ENCODE measurements at regions of chr9 and their contacts with region 1.

Region 1: GRCh38 chr9:21110708-21111576 is 30.7 kb downstream of the IFNW1 start:
- DNase-seq: peak; percentile 82
- ATAC-seq: peak; percentile 93
- H3K4me3 ChIP-seq: no peak overlapping the region
- H3K27ac ChIP-seq: no peak overlapping the region
- H3K4me1 ChIP-seq: no peaks in the 10 kb centered on the region
- H3K27me3 ChIP-seq: no peaks in the 10 kb centered on the region
- CTCF ChIP-seq: peak; percentile 90
- POLR2A ChIP-seq: no peak
- RAD21 ChIP-seq: peak; percentile 97

Region 2: DNA sequence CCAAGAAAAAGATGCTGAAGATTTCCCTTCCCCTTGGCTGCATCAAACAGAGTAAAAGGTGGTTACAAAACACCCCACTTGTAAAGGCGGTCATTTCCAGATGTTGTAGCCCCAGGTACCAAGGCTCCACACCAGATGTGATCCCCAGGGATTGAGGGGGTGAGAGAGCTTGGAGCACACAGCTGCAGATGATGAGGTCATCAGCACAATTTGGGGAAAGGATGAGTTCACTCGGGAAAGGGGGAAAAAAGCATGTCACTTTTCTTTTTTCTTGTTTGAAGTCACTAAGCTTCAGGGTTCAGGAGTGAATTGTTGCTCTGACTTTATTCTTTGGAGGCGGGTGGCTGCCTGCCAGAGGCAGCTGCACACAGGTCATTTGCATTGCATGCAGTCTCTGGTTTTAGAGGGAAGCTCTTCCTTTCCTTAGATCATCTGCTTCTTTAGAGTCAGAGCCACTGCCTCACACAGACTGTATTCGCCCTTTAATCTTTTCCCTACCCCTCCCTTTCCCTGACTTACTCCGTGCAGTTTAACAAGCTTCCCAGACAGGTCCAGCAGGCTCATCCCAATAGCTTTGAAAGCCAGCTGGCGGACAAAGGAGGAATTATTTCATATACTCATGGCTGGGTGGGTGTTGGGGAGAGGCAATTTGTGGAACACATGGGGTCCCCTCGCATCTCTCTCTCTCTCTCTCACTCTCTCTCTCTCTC is 912.8 kb before region 1 on chr9:
- CTCF ChIA-PET with region 1: no interaction called
- POLR2A ChIA-PET with region 1: no interaction called
- dilution Hi-C with region 1: no loop called
- in situ Hi-C with region 1: loop called (anchors 25 kb)
- intact Hi-C with region 1: no loop called
- DNase-seq: no peak
- ATAC-seq: no peak
- H3K4me3 ChIP-seq: no peak overlapping the region
- H3K27ac ChIP-seq: no peak overlapping the region
- H3K4me1 ChIP-seq: no peaks in the 10 kb centered on the region
- H3K27me3 ChIP-seq: peaks cover 13% of the 10 kb centered on the region
- CTCF ChIP-seq: no peak
- POLR2A ChIP-seq: no peak
- RAD21 ChIP-seq: no peak

Region 3: DNA sequence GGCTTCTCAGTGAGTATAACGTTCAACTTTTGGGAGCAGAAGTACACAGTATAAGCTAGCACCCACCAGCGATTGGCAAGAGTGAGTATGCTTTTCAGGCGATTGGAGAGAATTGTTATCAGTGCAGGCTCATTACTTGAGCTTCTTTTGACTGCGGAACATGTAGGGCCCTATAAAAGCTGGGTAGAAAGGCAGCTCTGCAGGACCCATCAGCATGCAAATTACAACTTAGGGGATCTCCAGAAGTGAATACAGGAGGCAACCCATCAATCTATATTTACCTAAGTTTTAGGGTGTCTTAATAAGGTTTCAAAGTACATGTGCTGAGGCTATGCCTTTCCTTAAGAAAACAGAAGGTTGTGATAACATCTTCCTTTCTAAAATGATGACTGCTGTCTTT is 713.6 kb before region 1 on chr9:
- CTCF ChIA-PET with region 1: no interaction called
- POLR2A ChIA-PET with region 1: no interaction called
- dilution Hi-C with region 1: no loop called
- in situ Hi-C with region 1: no loop called
- intact Hi-C with region 1: no loop called
- DNase-seq: no peak
- ATAC-seq: no peak
- H3K4me3 ChIP-seq: no peak overlapping the region
- H3K27ac ChIP-seq: no peak overlapping the region
- H3K4me1 ChIP-seq: no peaks in the 10 kb centered on the region
- H3K27me3 ChIP-seq: no peaks in the 10 kb centered on the region
- CTCF ChIP-seq: no peak
- POLR2A ChIP-seq: no peak
- RAD21 ChIP-seq: no peak

Region 4: DNA sequence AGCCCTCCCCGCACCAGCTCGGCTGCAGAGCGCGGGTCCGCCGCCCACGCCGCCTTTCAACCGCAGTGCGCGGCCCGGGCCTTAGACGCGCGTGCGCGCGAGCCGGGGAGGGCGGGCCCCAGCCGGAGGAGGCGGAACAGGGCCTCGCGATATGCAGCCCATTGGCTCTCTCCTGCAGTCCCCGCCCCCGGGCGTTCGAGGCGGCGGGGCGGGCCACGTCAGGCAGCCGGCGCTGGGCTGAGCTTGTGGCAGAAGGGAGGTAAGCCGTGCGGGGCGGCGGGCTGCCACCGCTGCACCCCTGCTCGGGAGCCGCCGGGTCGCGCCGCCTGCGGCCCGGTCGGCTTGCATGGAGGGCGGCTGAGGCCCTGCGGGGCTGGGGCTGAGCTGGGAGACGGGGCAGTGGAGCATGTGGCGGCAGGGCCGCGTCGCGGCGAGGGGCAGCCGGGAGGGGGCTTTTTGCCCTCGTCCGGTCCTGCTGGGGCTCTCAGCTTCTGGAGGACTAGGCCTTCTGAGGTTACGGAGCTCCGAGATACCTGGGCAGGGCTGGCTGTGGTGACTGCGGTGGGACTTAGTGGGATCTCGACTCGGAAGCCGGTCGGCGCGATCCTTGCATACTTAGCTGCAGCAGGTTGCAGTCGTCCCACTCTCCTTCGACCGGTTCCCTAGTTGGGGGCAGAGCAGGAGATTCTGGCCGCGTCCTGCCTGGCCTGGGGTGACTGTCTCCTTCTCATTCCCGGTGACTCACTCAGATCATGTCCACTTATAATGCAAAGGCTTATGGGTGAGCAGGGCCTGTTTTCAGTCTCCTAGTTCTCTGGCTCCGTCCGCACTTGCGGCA is 426.7 kb before region 1 on chr9 and contains the start of gene FOCAD:
- CTCF ChIA-PET with region 1: no interaction called
- POLR2A ChIA-PET with region 1: no interaction called
- dilution Hi-C with region 1: no loop called
- in situ Hi-C with region 1: no loop called
- intact Hi-C with region 1: loop called (anchors 5 kb)
- DNase-seq: peak; percentile 92
- ATAC-seq: peak; percentile 99
- H3K4me3 ChIP-seq: peak within 1 kb of the TSS; percentile 60
- H3K27ac ChIP-seq: peak within 1 kb of the TSS; percentile 61
- H3K4me1 ChIP-seq: 0 out of 2 replicates have a peak, but pooled peaks cover under 1% of the 10 kb centered on the region
- H3K27me3 ChIP-seq: no peaks in the 10 kb centered on the region
- CTCF ChIP-seq: no peak
- POLR2A ChIP-seq: peak; percentile 95
- RAD21 ChIP-seq: no peak
- total RNA-seq, gene FOCAD: 73.9 and 91.2 TPM in 2 replicates

Region 5: DNA sequence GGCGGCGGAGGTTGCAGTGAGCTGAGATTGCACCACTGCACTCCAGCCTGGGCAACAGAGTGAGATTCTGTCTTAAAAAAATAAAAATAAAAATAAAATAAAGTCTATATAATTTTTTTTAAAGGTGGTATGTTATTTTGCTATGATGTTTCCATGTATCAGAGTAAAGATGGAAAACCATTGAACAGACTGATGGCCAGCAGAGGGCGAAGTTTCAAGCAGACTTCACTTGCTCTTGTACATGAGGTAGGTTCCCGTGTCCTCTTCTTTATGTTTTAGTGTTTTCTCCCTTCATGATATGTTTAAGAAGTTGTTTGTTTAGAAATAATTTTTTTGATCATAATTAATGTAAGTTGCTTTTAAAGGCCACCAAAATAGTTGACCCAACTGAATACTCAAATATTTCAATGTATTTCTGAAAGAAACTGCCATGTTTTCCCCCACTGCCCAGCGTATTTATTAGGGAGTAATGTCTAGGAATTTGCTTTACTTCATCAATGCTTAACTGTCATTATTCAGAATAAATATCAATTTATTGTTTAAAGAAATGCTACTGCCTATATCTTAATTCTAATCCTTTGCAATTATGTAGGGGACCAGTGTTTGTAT is 225.9 kb before region 1 on chr9:
- CTCF ChIA-PET with region 1: interaction called, 9 read pairs
- POLR2A ChIA-PET with region 1: no interaction called
- dilution Hi-C with region 1: no loop called
- in situ Hi-C with region 1: no loop called
- intact Hi-C with region 1: loop called (anchors 2 kb)
- DNase-seq: peak; percentile 57
- ATAC-seq: 0 out of 2 replicates have a peak, but pooled peaks have one; percentile 27
- H3K4me3 ChIP-seq: no peak overlapping the region
- H3K27ac ChIP-seq: no peak overlapping the region
- H3K4me1 ChIP-seq: no peaks in the 10 kb centered on the region
- H3K27me3 ChIP-seq: no peaks in the 10 kb centered on the region
- CTCF ChIP-seq: peak; percentile 50
- POLR2A ChIP-seq: no peak
- RAD21 ChIP-seq: peak; percentile 47

Region 6: GRCh38 chr9:20941174-20941690 is 169.7 kb before region 1 on chr9:
- CTCF ChIA-PET with region 1: interaction called, 7 read pairs
- POLR2A ChIA-PET with region 1: no interaction called
- dilution Hi-C with region 1: no loop called
- in situ Hi-C with region 1: no loop called
- intact Hi-C with region 1: loop called (anchors 1 kb)
- DNase-seq: peak; percentile 71
- ATAC-seq: peak; percentile 95
- H3K4me3 ChIP-seq: no peak overlapping the region
- H3K27ac ChIP-seq: no peak overlapping the region
- H3K4me1 ChIP-seq: no peaks in the 10 kb centered on the region
- H3K27me3 ChIP-seq: no peaks in the 10 kb centered on the region
- CTCF ChIP-seq: peak; percentile 88
- POLR2A ChIP-seq: no peak
- RAD21 ChIP-seq: peak; percentile 91

Measured in IMR-90 (cell line).